ENCODE measurements at regions of chr12 and their contacts with region 1.

Region 1: DNA sequence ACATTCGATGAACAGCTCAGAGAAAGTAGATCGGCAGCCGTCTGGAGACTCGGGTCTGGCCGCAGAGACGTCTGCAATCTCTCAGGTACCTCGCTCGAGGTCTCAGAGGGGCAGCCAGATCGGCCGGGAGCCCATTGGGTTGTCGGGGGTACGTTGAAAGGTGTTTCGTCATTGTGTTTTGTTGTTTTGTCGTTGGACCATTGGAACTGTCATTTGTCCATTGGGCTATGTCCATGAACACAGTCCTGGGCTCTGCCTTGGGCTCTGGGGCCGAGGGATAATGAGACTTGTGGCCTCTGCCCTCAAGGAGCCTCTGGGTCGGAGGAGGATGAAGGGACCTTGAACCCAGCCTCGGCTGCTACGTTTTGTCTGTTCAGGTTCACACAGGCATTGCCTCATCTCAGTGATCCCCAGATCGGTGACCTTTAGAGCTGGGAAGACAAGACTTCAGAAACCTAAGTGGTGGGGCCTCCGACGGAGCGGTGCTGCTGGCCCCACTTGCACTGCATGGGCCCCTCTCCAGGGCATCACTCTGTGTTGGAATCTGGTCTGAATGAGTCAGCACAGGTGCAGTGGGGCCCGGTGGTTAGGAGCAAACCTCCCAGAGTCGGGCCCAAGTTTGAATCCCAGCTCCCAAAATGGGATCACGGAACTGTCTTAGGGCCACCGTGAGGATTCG is 23.6 kb upstream of the MLXIP start:
- DNase-seq: no peak
- H3K4me3 ChIP-seq: no peak overlapping the region
- H3K27ac ChIP-seq: no peak overlapping the region
- H3K4me1 ChIP-seq: peaks cover 0 to 5% of the 10 kb centered on the region in 2 donors
- H3K27me3 ChIP-seq: no peaks in the 10 kb centered on the region
- CTCF ChIP-seq: no peak
- POLR2A ChIP-seq: no peak

Region 2: GRCh38 chr12:122067966-122068365 is 13.0 kb after region 1 on chr12:
- intact Hi-C with region 1: no loop called
- DNase-seq: no peak
- H3K4me3 ChIP-seq: no peak overlapping the region
- H3K27ac ChIP-seq: peak overlapping the region in 1 of 2 donors; percentile 42
- H3K4me1 ChIP-seq: peaks cover 2 to 6% of the 10 kb centered on the region in 2 donors
- H3K27me3 ChIP-seq: no peaks in the 10 kb centered on the region
- CTCF ChIP-seq: no peak
- POLR2A ChIP-seq: no peak

Region 3: GRCh38 chr12:122107261-122107660 is 52.3 kb after region 1 on chr12:
- intact Hi-C with region 1: no loop called
- DNase-seq: no peak
- H3K4me3 ChIP-seq: no peak overlapping the region
- H3K27ac ChIP-seq: peak overlapping the region in 1 of 2 donors; percentile 13
- H3K4me1 ChIP-seq: peaks cover 0 to 22% of the 10 kb centered on the region in 2 donors
- H3K27me3 ChIP-seq: no peaks in the 10 kb centered on the region
- CTCF ChIP-seq: no peak
- POLR2A ChIP-seq: no peak

Region 4: GRCh38 chr12:122123051-122123760 is 68.2 kb after region 1 on chr12:
- intact Hi-C with region 1: loop called (anchors 2 kb)
- DNase-seq: peak; percentile 77 to 79
- H3K4me3 ChIP-seq: no peak overlapping the region
- H3K27ac ChIP-seq: peak overlapping the region; percentile 42 to 57
- H3K4me1 ChIP-seq: peaks cover 0 to 15% of the 10 kb centered on the region in 2 donors
- H3K27me3 ChIP-seq: no peaks in the 10 kb centered on the region
- CTCF ChIP-seq: peak; percentile 79 to 89 (median 87)
- POLR2A ChIP-seq: no peak

Region 5: DNA sequence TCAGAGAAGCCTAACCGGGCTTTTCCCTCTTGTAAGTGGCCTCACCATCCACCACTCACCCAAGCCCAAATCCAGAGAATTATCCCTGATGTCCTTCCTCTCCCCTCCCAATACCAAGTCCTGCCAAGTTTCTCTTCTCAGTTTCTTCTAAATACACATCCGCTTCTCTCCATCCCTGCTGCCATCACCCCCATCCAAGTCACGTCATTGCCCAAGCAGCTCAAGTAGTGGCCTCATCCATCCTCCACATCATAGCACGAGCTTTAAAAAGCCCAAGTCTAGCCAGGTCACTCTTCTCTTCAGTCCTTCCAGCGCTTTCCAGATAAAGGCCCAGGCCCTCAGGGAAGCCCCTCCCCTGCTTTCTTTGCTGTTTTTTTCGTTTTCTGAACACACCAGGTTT is 93.7 kb after region 1 on chr12:
- intact Hi-C with region 1: no loop called
- DNase-seq: no peak
- H3K4me3 ChIP-seq: no peak overlapping the region
- H3K27ac ChIP-seq: no peak overlapping the region
- H3K4me1 ChIP-seq: no peaks in the 10 kb centered on the region
- H3K27me3 ChIP-seq: no peaks in the 10 kb centered on the region
- CTCF ChIP-seq: no peak
- POLR2A ChIP-seq: no peak

Measured in uterus (tissue), 4 donors.